Activated CD8-positive, alpha-beta memory T cell treated with anti-CD3 and anti-CD28 coated beads, Interleukin-2, amount 10 ng/mL, durations not matched to agents 7 days and 5 days (primary cell): ENCODE measurements at regions of chr15 and their contacts with region 1.

Region 1: DNA sequence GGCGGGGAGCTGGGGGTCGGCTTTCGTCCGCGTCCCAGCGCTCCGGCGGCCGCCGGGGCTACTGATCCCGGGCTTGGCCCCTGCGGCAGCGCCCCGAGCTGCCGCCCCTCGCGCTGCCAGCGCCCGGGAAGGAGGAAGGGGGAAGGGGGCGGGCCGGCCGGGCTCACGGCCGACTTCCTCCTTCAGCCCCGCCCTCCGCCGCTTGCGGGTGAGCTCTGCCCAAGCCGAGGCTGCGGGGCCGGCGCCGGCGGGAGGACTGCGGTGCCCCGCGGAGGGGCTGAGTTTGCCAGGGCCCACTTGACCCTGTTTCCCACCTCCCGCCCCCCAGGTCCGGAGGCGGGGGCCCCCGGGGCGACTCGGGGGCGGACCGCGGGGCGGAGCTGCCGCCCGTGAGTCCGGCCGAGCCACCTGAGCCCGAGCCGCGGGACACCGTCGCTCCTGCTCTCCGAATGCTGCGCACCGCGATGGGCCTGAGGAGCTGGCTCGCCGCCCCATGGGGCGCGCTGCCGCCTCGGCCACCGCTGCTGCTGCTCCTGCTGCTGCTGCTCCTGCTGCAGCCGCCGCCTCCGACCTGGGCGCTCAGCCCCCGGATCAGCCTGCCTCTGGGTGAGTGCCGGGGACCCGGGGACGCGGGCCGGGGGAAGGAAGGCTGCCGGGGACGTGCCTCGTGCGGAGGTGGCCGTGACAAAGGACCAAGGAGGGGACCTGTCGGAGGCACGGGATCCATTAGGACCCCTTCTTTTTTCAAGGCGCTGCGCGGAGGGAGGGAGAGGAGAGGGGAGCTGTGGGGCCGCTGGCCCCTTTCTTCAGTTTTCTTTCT is at the start of gene SEMA4B:
- DNase-seq: peak; percentile 81
- ATAC-seq: peak; percentile 95
- H3K4me3 Mint-ChIP-seq: peak within 1 kb of the TSS; percentile 76
- H3K27ac Mint-ChIP-seq: peak within 1 kb of the TSS; percentile 49
- H3K4me1 Mint-ChIP-seq: peaks cover 11% of the 10 kb centered on the region
- H3K27me3 Mint-ChIP-seq: peaks cover 5% of the 10 kb centered on the region
- total RNA-seq, gene SEMA4B: 6.0 to 13.8 TPM

Region 2: DNA sequence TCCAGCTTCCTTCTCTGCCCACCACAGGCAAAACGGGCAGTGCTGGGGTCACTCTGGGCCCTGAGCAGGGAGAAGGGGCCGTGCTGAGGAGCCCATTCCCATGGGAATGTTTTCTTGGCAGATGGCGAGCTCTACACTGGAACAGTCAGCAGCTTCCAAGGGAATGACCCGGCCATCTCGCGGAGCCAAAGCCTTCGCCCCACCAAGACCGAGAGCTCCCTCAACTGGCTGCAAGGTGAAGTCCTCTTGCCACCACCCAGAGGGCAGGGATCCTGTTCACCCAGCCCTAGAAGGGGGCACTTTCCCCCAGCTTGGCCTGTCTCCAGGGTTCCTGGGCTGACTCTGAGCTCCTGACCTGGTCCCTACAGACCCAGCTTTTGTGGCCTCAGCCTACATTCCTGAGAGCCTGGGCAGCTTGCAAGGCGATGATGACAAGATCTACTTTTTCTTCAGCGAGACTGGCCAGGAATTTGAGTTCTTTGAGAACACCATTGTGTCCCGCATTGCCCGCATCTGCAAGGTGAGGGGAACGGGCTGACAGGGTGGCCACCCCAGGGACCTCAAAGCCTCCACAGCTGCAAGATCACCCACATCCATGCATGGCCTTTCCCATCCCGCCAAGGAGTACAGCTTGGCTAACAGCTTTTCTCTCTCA is 20.0 kb after region 1 on chr15:
- CTCF ChIA-PET with region 1: interaction called, 11 read pairs
- DNase-seq: no peak
- ATAC-seq: peak; percentile 25
- H3K4me3 Mint-ChIP-seq: no peak overlapping the region
- H3K27ac Mint-ChIP-seq: no peak overlapping the region
- H3K4me1 Mint-ChIP-seq: peaks cover 17% of the 10 kb centered on the region
- H3K27me3 Mint-ChIP-seq: no peaks in the 10 kb centered on the region

Region 3: GRCh38 chr15:90291679-90292356 is 90.5 kb after region 1 on chr15:
- CTCF ChIA-PET with region 1: interaction called, 11 read pairs
- DNase-seq: peak; percentile 55
- ATAC-seq: no peak
- H3K4me3 Mint-ChIP-seq: no peak overlapping the region
- H3K27ac Mint-ChIP-seq: no peak overlapping the region
- H3K4me1 Mint-ChIP-seq: peaks cover 18% of the 10 kb centered on the region
- H3K27me3 Mint-ChIP-seq: peaks cover 10% of the 10 kb centered on the region